HepG2 (cell line): ENCODE measurements at regions of chr2 and their contacts with region 1.

Region 1: GRCh38 chr2:30679426-30680088 is 127.7 kb downstream of the CAPN13 start:
- DNase-seq: no peak
- ATAC-seq: no peak
- H3K4me3 ChIP-seq: no peak overlapping the region
- H3K27ac ChIP-seq: no peak overlapping the region
- H3K4me1 ChIP-seq: no peaks in the 10 kb centered on the region
- H3K27me3 ChIP-seq: peaks cover 0 to 22% of the 10 kb centered on the region in 2 experiments; a peak in 4 of 5 replicates
- CTCF ChIP-seq: no peak
- EP300 ChIP-seq: no peak
- POLR2A ChIP-seq: no peak
- RAD21 ChIP-seq: no peak

Region 2: GRCh38 chr2:30436859-30437435 is 242.6 kb before region 1 on chr2:
- CTCF ChIA-PET with region 1: no interaction called
- POLR2A ChIA-PET with region 1: no interaction called
- in situ Hi-C with region 1: loop called (anchors 10 kb)
- intact Hi-C with region 1: loop called (anchors 10 kb)
- DNase-seq: no peak
- ATAC-seq: no peak
- H3K4me3 ChIP-seq: no peak overlapping the region
- H3K27ac ChIP-seq: no peak overlapping the region
- H3K4me1 ChIP-seq: peaks cover 23% of the 10 kb centered on the region
- H3K27me3 ChIP-seq: no peaks in the 10 kb centered on the region
- CTCF ChIP-seq: no peak
- EP300 ChIP-seq: no peak
- POLR2A ChIP-seq: no peak
- RAD21 ChIP-seq: no peak

Region 3: GRCh38 chr2:30561349-30561748 is 118.2 kb before region 1 on chr2:
- CTCF ChIA-PET with region 1: no interaction called
- POLR2A ChIA-PET with region 1: no interaction called
- in situ Hi-C with region 1: no loop called
- intact Hi-C with region 1: loop called (anchors 5 kb)
- DNase-seq: peak; percentile 24
- ATAC-seq: peak; percentile 24; the same call in 1 of the 3 replicates
- H3K4me3 ChIP-seq: no peak overlapping the region
- H3K27ac ChIP-seq: no peak overlapping the region
- H3K4me1 ChIP-seq: no peaks in the 10 kb centered on the region
- H3K27me3 ChIP-seq: no peaks in the 10 kb centered on the region
- CTCF ChIP-seq: no peak
- EP300 ChIP-seq: no peak
- POLR2A ChIP-seq: no peak
- RAD21 ChIP-seq: no peak

Region 4: DNA sequence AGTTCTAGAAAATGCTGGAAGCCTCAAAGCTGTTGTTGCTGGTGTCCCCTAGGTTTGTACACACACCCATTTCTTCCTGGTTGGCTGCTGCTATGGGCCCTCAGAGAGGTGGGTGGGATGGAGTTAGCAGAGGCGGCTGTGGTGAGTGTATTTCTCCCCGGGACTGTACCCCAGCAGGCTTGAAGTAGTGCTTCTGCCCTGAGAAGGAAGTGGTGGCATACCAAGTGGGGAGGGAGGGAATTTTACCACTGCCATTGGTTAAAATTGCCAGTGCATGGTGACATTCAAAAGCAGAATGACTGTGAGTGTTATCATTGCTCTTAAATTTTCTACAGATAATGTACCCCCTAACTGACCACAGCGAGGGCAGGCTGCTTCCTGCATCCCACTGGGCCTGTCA is 253.3 kb after region 1 on chr2:
- CTCF ChIA-PET with region 1: no interaction called
- POLR2A ChIA-PET with region 1: no interaction called
- in situ Hi-C with region 1: no loop called
- intact Hi-C with region 1: no loop called
- DNase-seq: no peak
- ATAC-seq: no peak
- H3K4me3 ChIP-seq: no peak overlapping the region
- H3K27ac ChIP-seq: no peak overlapping the region
- H3K4me1 ChIP-seq: no peaks in the 10 kb centered on the region
- H3K27me3 ChIP-seq: peaks cover 4 to 29% of the 10 kb centered on the region in 2 experiments; a peak in 3 of 5 replicates
- CTCF ChIP-seq: no peak
- EP300 ChIP-seq: no peak
- POLR2A ChIP-seq: no peak
- RAD21 ChIP-seq: no peak